GM13976 (cell line): ENCODE measurements at regions of chr13 and their contacts with region 1.

Region 1: DNA sequence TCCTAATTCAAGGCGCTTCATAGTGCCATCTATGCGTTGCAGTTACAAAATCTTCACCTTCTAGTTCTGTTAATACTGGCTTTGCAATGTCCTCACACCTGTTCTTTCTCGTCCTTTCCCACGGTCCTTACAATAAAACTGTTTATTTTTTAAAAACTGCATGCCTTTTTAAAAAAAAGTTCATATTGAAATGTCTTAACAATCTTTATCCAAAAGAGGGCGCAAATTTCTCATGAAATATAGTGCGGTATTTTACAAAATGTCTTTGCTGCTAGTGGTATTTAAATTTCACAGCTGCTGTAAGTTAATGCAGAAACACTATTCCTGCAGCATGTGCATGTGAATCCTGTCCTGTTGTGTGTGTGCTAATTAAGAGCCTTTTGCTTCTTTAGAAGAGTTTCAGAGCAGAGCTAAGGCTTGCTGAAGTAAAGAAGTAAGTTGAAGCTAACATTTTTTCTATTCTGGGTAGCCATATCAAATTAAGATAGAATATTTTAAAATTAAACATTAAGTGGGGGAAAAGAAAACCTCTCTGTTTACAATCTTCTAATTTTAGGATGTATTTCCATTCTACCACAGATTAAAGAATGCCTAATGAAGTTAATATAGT is 15.8 kb upstream of the CLDN10 start:
- DNase-seq: no peak
- CTCF ChIP-seq: peak; percentile 3

Region 2: DNA sequence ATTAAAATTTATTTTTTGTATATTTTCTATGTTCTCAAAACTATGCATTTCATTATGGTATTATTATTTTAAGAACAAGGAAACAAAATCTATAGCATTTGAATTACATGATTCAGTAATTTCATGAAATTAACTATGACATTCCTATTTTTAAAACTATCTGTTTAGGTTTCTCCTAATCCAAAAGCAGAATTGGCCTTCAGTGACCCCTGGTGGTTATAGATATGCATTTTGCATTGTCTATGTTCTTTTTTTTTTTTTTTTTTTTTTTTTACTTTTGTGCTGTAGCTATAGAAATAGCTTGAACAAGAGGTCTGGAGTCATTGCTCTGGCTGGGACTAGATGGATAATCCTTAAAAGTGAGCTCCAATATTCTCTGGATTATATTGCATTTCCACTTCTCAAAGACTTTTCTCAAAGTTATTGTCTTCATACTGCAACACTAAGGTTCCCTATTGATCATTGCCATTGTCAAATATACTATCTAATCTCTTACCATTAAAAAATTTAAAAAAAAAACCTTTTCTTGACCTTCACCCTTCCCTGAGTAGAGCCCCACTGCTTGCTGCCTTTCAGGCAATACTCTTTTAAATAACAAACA is 124.3 kb after region 1 on chr13:
- in situ Hi-C with region 1: loop called (anchors 25 kb)
- DNase-seq: no peak
- CTCF ChIP-seq: peak; percentile 34

Region 3: GRCh38 chr13:95834134-95834765 is 297.5 kb after region 1 on chr13:
- in situ Hi-C with region 1: loop called (anchors 25 kb)
- DNase-seq: peak; percentile 49
- CTCF ChIP-seq: peak; percentile 89

Region 4: GRCh38 chr13:96065849-96066248 is 529.1 kb after region 1 on chr13:
- in situ Hi-C with region 1: no loop called
- DNase-seq: no peak
- CTCF ChIP-seq: no peak